Activated CD4-positive, alpha-beta memory T cell treated with anti-CD3 and anti-CD28 coated beads for 36 hours (primary cell): ENCODE measurements at regions of chr1 and their contacts with region 1.

Region 1: GRCh38 chr1:46340404-46341221 is at the start of gene NSUN4:
- DNase-seq: peak; percentile 93
- H3K4me3 Mint-ChIP-seq: peak within 1 kb of the TSS; percentile 94
- H3K27ac Mint-ChIP-seq: peak within 1 kb of the TSS; percentile 98
- H3K4me1 Mint-ChIP-seq: peaks cover 44% of the 10 kb centered on the region
- H3K27me3 Mint-ChIP-seq: no peaks in the 10 kb centered on the region
- total RNA-seq, gene NSUN4: 29.1 to 29.9 TPM

Region 2: DNA sequence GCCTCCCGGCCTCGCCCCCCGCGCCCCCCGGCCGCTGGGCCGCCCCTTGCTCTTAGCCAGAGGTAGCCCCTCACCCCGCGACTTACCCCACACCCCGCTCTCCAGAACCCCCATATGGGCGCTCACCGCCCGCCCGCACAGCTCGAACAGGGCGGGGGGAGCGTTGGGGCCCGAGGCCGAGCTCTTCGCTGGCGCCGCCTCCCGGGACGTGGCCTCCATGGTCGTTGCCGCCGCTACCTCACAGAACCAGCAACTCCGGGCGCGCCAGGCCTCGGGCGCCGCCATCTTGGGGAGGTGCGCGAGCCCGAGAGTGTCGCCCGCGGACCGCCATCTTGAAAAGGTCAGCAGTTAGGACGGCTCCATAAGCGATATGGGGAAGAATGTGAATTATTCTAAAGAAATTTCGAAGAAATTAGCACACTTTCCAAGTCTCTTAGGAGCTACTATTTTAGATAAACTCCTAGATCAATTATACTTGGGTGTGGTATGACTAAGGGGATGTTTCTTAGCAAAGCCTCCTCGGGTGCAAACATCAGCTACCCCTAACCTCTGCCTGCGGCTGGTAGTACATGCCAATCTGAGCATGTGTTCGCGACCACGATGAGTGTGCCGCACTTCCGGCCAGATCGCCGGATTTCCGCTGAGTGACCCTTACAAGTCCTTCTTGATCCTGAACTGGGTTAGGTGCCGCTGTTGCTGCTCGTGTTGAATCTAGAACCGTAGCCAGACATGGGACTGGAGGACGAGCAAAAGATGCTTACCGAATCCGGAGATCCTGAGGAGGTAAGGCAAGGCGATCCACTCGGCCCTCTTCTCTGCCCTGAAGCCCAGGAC is 37.4 kb before region 1 on chr1 and contains the starts of genes LRRC41 and UQCRH:
- CTCF ChIA-PET with region 1: interaction called, 19 read pairs
- POLR2A ChIA-PET with region 1: interaction called, 15 read pairs
- intact Hi-C with region 1: loop called (anchors 1 kb)
- DNase-seq: peak; percentile 94
- H3K4me3 Mint-ChIP-seq: peak within 1 kb of the TSS; percentile 98
- H3K27ac Mint-ChIP-seq: peak within 1 kb of the TSS; percentile 94
- H3K4me1 Mint-ChIP-seq: peaks cover 44% of the 10 kb centered on the region
- H3K27me3 Mint-ChIP-seq: no peaks in the 10 kb centered on the region
- total RNA-seq, gene LRRC41: 31.4 to 34.6 TPM
- total RNA-seq, gene UQCRH: 351 to 353 TPM